ENCODE measurements at regions of chr5 and their contacts with region 1.

Region 1: GRCh38 chr5:59799668-59800346 is 93.7 kb downstream of the PDE4D start:
- DNase-seq: peak; percentile 23
- ATAC-seq: peak; percentile 74
- H3K4me3 Mint-ChIP-seq: no peak overlapping the region
- H3K27ac Mint-ChIP-seq: no peak overlapping the region
- H3K4me1 Mint-ChIP-seq: no peaks in the 10 kb centered on the region
- H3K27me3 Mint-ChIP-seq: no peaks in the 10 kb centered on the region

Region 2: DNA sequence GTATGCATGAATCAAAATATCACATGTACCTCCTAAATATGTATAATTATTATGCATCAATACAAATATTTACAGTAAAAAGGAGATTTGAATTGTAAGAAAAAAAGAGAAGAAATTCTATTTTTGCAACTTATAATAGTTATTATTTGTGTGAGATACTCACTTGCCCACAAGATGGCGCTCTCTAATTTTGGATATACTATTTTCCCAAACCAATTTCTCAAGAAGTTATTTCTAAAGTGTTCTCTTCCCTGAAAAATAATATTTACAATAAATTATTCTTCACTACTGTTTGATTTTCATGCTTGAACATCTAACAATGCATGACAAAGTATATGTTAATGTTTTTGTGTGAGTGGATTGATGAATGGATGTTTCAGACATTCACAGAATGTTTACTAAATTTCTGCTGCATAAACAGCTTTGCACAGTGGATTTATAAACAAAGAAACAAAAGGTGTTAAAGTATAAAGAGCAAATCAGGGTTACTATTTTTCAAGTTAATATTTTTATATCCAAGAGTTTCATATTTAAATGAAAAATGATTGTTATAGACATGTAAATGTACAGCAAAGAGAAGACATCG is 409.6 kb before region 1 on chr5:
- CTCF ChIA-PET with region 1: interaction called, 27 read pairs
- POLR2A ChIA-PET with region 1: no interaction called
- intact Hi-C with region 1: loop called (anchors 1 kb)
- DNase-seq: peak; percentile 27
- ATAC-seq: no peak
- H3K4me3 Mint-ChIP-seq: no peak overlapping the region
- H3K27ac Mint-ChIP-seq: no peak overlapping the region
- H3K4me1 Mint-ChIP-seq: no peaks in the 10 kb centered on the region
- H3K27me3 Mint-ChIP-seq: peaks cover 6% of the 10 kb centered on the region

Region 3: GRCh38 chr5:59506285-59506877 is 293.4 kb before region 1 on chr5:
- CTCF ChIA-PET with region 1: interaction called, 17 read pairs
- POLR2A ChIA-PET with region 1: no interaction called
- intact Hi-C with region 1: loop called (anchors 1 to 2 kb)
- DNase-seq: no peak
- ATAC-seq: no peak
- H3K4me3 Mint-ChIP-seq: no peak overlapping the region
- H3K27ac Mint-ChIP-seq: no peak overlapping the region
- H3K4me1 Mint-ChIP-seq: no peaks in the 10 kb centered on the region
- H3K27me3 Mint-ChIP-seq: peaks cover 2% of the 10 kb centered on the region

Region 4: GRCh38 chr5:59724482-59725391 is 75.1 kb before region 1 on chr5:
- CTCF ChIA-PET with region 1: no interaction called
- POLR2A ChIA-PET with region 1: no interaction called
- intact Hi-C with region 1: loop called in 1 of 2 experiments (anchors 2 kb)
- DNase-seq: peak; percentile 31
- ATAC-seq: no peak
- H3K4me3 Mint-ChIP-seq: no peak overlapping the region
- H3K27ac Mint-ChIP-seq: no peak overlapping the region
- H3K4me1 Mint-ChIP-seq: no peaks in the 10 kb centered on the region
- H3K27me3 Mint-ChIP-seq: peaks cover 3% of the 10 kb centered on the region